ENCODE measurements at regions of chr14 and their contacts with region 1.

Region 1: DNA sequence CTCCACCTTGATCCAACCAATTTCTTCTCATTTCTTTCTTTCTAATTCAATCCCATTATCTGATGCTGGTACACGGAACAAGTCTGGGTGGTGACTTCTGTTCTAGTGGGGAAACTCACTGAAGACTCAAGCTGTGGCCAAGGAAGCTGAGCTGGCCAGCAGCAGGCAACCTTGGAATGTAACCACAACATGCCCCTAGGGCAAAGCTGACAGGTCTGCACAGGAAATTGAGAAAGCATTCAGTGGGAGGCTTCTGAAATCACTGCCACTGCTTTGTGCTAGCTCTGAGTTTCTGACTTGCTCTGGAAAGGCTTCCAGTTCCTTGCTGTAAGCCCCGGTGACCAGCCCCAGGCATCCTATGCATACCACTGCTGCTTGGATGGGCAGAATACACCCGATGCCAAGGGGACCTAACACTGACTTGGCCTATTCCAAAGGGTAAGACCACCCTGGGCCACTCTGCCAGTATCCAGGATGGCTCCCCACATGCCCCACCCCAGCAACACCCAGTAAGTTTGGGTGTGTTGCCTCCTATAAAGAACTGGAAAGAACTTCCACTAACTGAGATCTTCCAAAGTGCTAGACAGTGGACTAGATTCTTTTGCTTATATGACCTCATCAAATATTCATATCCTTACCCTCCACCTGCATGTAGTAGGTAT is 84.5 kb upstream of the CDKN3 start:
- DNase-seq: peak; percentile 81
- H3K4me3 ChIP-seq: no peak overlapping the region
- H3K27ac ChIP-seq: peak overlapping the region; percentile 25
- H3K4me1 ChIP-seq: peaks cover 23% of the 10 kb centered on the region
- H3K27me3 ChIP-seq: no peaks in the 10 kb centered on the region
- CTCF ChIP-seq: no peak
- POLR2A ChIP-seq: no peak

Region 2: DNA sequence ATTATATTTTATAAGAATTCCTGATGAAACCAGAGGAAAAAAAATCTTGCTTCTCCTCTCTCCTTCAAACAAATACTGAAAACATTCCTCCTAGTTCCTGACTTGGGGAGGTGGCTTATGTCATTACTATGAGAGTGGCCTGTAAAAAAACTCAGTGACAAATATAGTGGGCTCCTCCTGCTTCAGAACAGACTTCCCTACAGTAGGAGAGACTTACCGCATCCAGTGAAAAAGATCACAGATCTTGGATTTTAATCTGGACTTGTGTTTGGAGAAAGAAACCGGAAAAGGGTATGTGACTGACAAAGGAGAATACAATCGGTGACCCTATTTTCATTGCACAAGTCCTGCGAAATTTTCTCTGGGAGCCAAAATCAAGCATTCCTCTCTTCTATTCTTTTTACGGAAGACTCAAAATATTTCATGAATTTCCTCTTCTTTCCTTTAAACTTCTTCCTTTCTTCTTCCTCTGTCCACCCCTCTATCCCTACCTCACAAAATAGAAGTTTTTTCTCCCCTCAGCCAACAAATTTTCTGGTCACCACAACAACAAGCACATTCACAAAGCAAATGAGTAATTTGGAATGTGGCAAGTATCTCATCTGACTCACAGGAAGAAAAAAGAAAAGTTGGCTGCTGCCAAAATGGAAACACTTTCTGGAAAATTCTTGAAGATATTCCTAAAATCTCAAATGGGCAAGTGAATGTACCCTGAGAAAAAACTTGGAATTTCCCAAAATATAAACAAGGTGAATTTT is 100.5 kb before region 1 on chr14:
- CTCF ChIA-PET with region 1: interaction called, 3 read pairs
- POLR2A ChIA-PET with region 1: no interaction called
- dilution Hi-C with region 1: no loop called
- intact Hi-C with region 1: loop called (anchors 5 kb)
- DNase-seq: peak; percentile 86
- H3K4me3 ChIP-seq: no peak overlapping the region
- H3K27ac ChIP-seq: peak overlapping the region; percentile 91
- H3K4me1 ChIP-seq: peaks cover 25% of the 10 kb centered on the region
- H3K27me3 ChIP-seq: no peaks in the 10 kb centered on the region
- CTCF ChIP-seq: no peak
- POLR2A ChIP-seq: no peak

Measured in endothelial cell of umbilical vein (primary cell).